Posterior cingulate gyrus (tissue), 11 donors: ENCODE measurements at regions of chr2 and their contacts with region 1.

Region 1: GRCh38 chr2:198127627-198128026 is 323.2 kb downstream of the PLCL1 start:
- DNase-seq: peak in 4 of 10 donors; percentile 14 to 82 (median 24)

Region 2: DNA sequence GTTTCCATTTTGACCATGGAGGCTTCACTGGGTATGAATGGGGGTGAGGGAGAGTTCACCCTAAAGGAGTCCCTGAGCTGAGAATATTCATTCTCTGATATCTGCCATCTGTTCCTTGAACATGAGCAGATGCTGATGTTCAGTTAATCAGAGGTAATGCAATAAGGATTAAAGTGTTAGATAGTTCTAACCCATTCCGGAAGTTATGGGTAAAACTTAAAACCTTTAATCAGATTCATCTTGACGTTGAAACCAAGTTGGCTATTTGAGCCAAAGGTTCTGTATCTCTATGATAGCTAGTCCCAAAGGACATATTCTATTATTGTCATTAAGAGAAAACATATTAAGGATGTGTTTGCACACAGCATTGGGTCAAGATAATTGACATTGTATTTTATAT is 54.4 kb before region 1 on chr2:
- intact Hi-C with region 1: no loop called
- DNase-seq: no peak

Region 3: GRCh38 chr2:198214114-198214596 is 86.5 kb after region 1 on chr2:
- intact Hi-C with region 1: no loop called
- DNase-seq: no peak

Region 4: GRCh38 chr2:198296665-198297308 is 169.2 kb after region 1 on chr2:
- intact Hi-C with region 1: loop called (anchors 10 kb)
- DNase-seq: peak in 8 of 10 donors; percentile 28 to 91 (median 67)